SK-N-SH (cell line): ENCODE measurements at regions of chr17 and their contacts with region 1.

Region 1: GRCh38 chr17:77186141-77186604 is 45.4 kb downstream of the SEC14L1 start:
- DNase-seq: no peak
- H3K4me3 ChIP-seq: no peak overlapping the region
- H3K27ac ChIP-seq: no peak overlapping the region
- H3K4me1 ChIP-seq: peaks cover 22 to 25% of the 10 kb centered on the region in 2 experiments; a peak in 3 of 4 replicates
- H3K27me3 ChIP-seq: no peaks in the 10 kb centered on the region
- CTCF ChIP-seq: no peak
- EP300 ChIP-seq: no peak
- RAD21 ChIP-seq: no peak

Region 2: GRCh38 chr17:77109764-77110359 is 76.3 kb before region 1 on chr17:
- CTCF ChIA-PET with region 1: no interaction called
- POLR2A ChIA-PET with region 1: no interaction called
- DNase-seq: no peak
- H3K4me3 ChIP-seq: no peak overlapping the region
- H3K27ac ChIP-seq: peak overlapping the region in 1 of 2 experiments; percentile 28; a peak in 3 of 4 replicates
- H3K4me1 ChIP-seq: peaks cover 0 to 13% of the 10 kb centered on the region in 2 experiments; a peak in 2 of 4 replicates
- H3K27me3 ChIP-seq: no peaks in the 10 kb centered on the region
- CTCF ChIP-seq: no peak
- EP300 ChIP-seq: no peak
- RAD21 ChIP-seq: no peak

Region 3: DNA sequence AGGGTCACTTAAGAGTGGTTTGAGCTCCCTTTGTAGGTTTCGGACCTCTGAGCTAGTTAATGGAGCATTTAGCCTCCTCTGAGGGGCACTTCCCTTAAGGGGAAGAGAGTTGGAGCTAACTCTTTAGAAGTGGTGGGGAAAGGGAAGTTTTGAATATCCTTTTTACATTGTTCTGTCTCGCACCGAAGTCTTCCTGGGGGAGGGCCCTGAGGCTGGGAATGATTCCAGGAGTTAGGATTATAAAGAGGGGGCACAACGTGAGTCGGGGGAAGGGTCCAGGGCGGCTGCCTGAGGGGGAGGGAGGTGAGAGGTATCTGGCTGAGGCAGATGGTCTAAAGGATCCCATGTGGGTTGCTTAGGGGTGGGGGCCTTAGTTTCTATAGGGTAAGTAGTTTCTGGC is 13.1 kb before region 1 on chr17:
- CTCF ChIA-PET with region 1: interaction called, 28 read pairs
- POLR2A ChIA-PET with region 1: no interaction called
- DNase-seq: no peak
- H3K4me3 ChIP-seq: no peak overlapping the region; a peak in 1 of 4 replicates
- H3K27ac ChIP-seq: no peak overlapping the region
- H3K4me1 ChIP-seq: no peaks in the 10 kb centered on the region
- H3K27me3 ChIP-seq: no peaks in the 10 kb centered on the region
- CTCF ChIP-seq: no peak
- EP300 ChIP-seq: no peak
- RAD21 ChIP-seq: no peak